ENCODE measurements at regions of chrX and their contacts with region 1.

Region 1: GRCh38 chrX:2640275-2641150 is 50.6 kb upstream of the CD99 start:
- DNase-seq: no peak
- H3K4me3 ChIP-seq: no peak overlapping the region
- H3K27ac ChIP-seq: no peak overlapping the region
- H3K4me1 ChIP-seq: no peaks in the 10 kb centered on the region
- H3K27me3 ChIP-seq: no peaks in the 10 kb centered on the region
- CTCF ChIP-seq: no peak

Region 2: GRCh38 chrX:2819345-2820135 is 179.0 kb after region 1 on chrX:
- intact Hi-C with region 1: loop called (anchors 10 kb)
- DNase-seq: no peak
- H3K4me3 ChIP-seq: no peak overlapping the region
- H3K27ac ChIP-seq: no peak overlapping the region
- H3K4me1 ChIP-seq: no peaks in the 10 kb centered on the region
- H3K27me3 ChIP-seq: no peaks in the 10 kb centered on the region
- CTCF ChIP-seq: peak; percentile 55

Measured in left ventricle myocardium inferior (tissue), 1 donor.